ENCODE measurements at regions of chr11 and their contacts with region 1.

Region 1: DNA sequence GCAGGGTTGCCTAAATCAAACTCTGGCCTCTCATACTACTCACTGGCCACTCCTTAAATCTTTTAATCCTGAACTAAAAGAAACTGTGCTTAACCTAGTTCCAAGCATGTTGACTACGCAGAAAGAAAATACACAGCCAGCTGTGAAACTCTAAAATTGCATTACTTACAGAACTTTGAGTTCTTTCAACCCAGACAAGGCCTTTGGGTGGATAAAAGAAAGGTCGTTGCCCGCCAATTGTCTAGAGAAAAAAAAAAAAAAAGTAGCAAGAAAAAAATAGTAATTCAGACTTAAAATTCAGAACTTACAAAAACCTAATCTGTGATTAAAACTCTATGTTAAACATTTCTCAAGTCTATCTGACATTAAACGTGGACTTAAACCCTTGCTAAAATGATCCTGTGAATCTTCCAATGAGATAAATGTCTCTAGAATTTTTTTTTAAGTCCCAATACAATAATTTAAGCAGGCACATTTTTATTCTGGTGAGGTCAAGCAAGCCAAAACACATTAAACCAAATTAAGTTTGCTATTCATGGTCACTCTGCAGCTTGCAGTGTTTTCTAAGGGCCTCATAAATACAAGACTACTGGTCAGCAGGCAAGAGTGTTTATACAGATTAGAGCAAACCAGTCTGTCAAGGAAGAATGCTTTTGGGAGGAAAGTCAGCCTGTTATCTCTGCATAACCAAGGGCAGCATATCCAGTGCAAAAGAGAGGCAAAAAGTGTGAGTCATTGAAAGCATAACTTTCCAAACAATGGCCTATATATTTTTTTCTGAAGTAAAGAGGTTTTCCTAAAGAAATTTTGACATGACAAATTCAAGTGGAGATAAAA is 29.5 kb upstream of the CCDC34 start:
- DNase-seq: peak; percentile 66
- ATAC-seq: no peak
- H3K4me3 ChIP-seq: no peak overlapping the region
- H3K27ac ChIP-seq: peak overlapping the region; percentile 58
- H3K4me1 ChIP-seq: peaks cover 97% of the 10 kb centered on the region
- H3K27me3 ChIP-seq: no peaks in the 10 kb centered on the region
- CTCF ChIP-seq: no peak
- EP300 ChIP-seq: 0 out of 4 replicates have a peak, but pooled peaks of 1 of the 2 experiments have one; percentile 17
- POLR2A ChIP-seq: no peak
- RAD21 ChIP-seq: no peak

Region 2: GRCh38 chr11:27116684-27117083 is 275.8 kb before region 1 on chr11:
- CTCF ChIA-PET with region 1: no interaction called
- POLR2A ChIA-PET with region 1: no interaction called
- in situ Hi-C with region 1: no loop called
- intact Hi-C with region 1: no loop called
- DNase-seq: no peak
- ATAC-seq: no peak
- H3K4me3 ChIP-seq: no peak overlapping the region
- H3K27ac ChIP-seq: no peak overlapping the region
- H3K4me1 ChIP-seq: no peaks in the 10 kb centered on the region
- H3K27me3 ChIP-seq: no peaks in the 10 kb centered on the region
- CTCF ChIP-seq: no peak
- EP300 ChIP-seq: no peak
- POLR2A ChIP-seq: no peak
- RAD21 ChIP-seq: no peak

Region 3: DNA sequence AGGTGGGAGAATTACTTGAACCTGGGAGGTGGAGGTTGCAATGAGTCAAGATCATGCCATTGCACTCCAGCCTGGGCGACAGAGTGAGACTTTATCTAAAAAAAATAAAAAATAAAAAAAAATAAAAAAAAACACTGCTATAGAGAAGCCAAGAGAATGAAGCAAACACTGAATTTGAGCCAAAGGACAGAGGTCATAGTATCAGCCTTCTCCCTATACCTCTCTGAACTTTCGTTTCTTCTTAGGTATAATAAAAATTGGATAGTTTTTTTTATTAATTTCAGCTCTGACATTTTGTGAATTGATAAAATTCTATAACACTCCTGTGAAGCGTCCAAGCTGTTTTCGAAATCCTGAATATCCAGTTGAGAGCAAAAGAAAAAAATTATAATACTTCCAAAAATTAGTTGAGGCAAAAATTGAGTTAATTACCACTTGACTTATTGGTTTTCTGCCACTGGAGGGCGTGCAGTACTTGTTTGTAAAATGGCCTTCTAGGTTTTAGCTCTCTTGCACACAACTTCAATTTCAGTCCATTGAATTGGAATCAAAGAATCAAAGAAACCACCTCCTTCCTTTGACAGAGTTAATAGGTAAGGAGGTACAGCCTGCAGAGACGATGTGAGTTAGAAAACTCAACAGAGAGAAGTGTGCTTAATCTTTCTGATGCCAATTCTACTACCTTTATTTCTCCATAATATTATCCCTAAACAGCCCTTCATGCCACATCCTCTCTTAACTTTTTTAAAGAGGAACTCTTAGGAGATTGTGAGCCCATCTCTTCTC is 208.6 kb before region 1 on chr11:
- CTCF ChIA-PET with region 1: no interaction called
- POLR2A ChIA-PET with region 1: no interaction called
- in situ Hi-C with region 1: no loop called
- intact Hi-C with region 1: loop called (anchors 5 kb)
- DNase-seq: peak; percentile 63
- ATAC-seq: peak; percentile 18; the same call in 1 of the 3 replicates
- H3K4me3 ChIP-seq: no peak overlapping the region
- H3K27ac ChIP-seq: no peak overlapping the region
- H3K4me1 ChIP-seq: peaks cover 43% of the 10 kb centered on the region
- H3K27me3 ChIP-seq: no peaks in the 10 kb centered on the region
- CTCF ChIP-seq: peak; percentile 76
- EP300 ChIP-seq: no peak
- POLR2A ChIP-seq: no peak
- RAD21 ChIP-seq: peak; percentile 77

Region 4: GRCh38 chr11:27362749-27363575 is 29.5 kb before region 1 on chr11 and contains the start of gene CCDC34:
- CTCF ChIA-PET with region 1: no interaction called
- POLR2A ChIA-PET with region 1: interaction called, 13 read pairs
- in situ Hi-C with region 1: no loop called
- intact Hi-C with region 1: no loop called
- DNase-seq: peak; percentile 87
- ATAC-seq: peak; percentile 96
- H3K4me3 ChIP-seq: peak within 1 kb of the TSS; percentile 59 to 88 (median 66)
- H3K27ac ChIP-seq: peak within 1 kb of the TSS; percentile 76
- H3K4me1 ChIP-seq: peaks cover 55% of the 10 kb centered on the region
- H3K27me3 ChIP-seq: no peaks in the 10 kb centered on the region; a peak in 1 of 5 replicates
- CTCF ChIP-seq: peak; percentile 42
- EP300 ChIP-seq: no peak
- POLR2A ChIP-seq: peak; percentile 51 to 69; a peak in 3 of 4 replicates
- RAD21 ChIP-seq: peak; percentile 84
- total RNA-seq, gene CCDC34: 34.3 and 37.9 TPM in 2 replicates

Region 5: DNA sequence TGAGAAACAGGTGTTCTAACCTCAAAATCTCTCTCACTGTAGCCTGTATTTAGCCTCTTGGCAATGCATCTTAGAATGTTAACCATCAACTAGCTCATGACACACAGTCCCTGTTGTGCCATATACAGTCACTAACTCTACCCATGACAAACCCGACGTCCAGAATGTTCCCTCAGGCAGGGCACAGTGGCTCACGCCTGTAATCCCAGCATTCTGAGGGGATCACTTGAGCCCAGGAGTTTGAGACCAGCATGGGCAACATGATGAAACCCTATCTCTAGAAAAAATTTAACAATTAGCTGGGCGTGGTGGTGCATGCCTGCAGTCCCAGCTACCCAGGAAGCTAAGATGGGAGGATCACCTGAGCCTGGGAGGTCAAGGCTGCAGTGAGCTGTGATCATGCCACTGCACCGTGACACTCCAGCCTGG is 11.2 kb before region 1 on chr11:
- CTCF ChIA-PET with region 1: no interaction called
- POLR2A ChIA-PET with region 1: interaction called, 65 read pairs
- in situ Hi-C with region 1: no loop called
- intact Hi-C with region 1: no loop called
- DNase-seq: no peak
- ATAC-seq: no peak
- H3K4me3 ChIP-seq: no peak overlapping the region
- H3K27ac ChIP-seq: no peak overlapping the region
- H3K4me1 ChIP-seq: peaks cover 17% of the 10 kb centered on the region
- H3K27me3 ChIP-seq: no peaks in the 10 kb centered on the region
- CTCF ChIP-seq: no peak
- EP300 ChIP-seq: no peak
- POLR2A ChIP-seq: no peak
- RAD21 ChIP-seq: no peak

Region 6: DNA sequence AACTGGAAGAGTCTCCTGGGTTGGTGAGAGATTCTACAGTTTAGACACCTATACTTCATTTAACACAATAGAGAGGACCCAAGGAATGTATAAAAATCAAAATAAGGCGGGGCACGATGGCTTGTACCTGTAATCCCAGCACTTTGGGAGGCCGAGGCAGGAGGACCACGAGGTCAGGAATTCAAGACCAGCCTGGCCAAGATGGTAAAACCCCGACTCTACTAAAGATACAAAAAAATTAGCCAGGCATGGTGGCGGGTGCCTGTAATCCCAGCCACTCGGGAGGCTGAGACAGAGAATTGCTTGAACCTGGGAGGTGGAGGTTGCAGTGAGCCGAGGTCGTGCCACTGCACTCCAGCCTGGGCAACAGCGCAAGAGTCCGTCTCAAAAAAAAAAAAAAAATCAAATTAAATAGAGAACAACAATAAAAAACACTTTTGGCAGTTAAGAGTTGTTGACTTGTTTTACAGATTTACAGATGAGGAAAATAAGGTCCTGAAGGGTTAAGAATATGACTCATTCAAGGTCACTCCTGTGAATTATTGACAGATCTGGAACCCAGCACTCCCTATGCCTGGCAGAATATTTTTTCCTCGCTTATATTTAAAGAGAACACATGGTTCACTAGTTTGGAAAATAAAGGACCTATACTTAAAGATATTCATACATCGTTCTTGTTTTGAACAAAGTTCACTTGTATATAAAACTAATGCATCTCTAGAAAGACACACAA is 74.9 kb after region 1 on chr11:
- CTCF ChIA-PET with region 1: no interaction called
- POLR2A ChIA-PET with region 1: interaction called, 40 read pairs
- in situ Hi-C with region 1: loop called (anchors 5 kb)
- intact Hi-C with region 1: loop called (anchors 2 kb)
- DNase-seq: peak; percentile 86
- ATAC-seq: peak; percentile 41; the same call in 2 of the 3 replicates
- H3K4me3 ChIP-seq: peak overlapping the region; percentile 64 to 92 (median 85); a peak in 5 of 6 replicates
- H3K27ac ChIP-seq: peak overlapping the region; percentile 90
- H3K4me1 ChIP-seq: peaks cover 66% of the 10 kb centered on the region
- H3K27me3 ChIP-seq: no peaks in the 10 kb centered on the region; a peak in 1 of 5 replicates
- CTCF ChIP-seq: no peak
- EP300 ChIP-seq: peak in 1 of 2 experiments; percentile 58; a peak in 2 of 4 replicates
- POLR2A ChIP-seq: 0 out of 4 replicates have a peak, but pooled peaks of 1 of the 2 experiments have one; percentile 18
- RAD21 ChIP-seq: no peak

Measured in HepG2 (cell line).